ENCODE measurements at regions of chr1 and their contacts with region 1.

Region 1: DNA sequence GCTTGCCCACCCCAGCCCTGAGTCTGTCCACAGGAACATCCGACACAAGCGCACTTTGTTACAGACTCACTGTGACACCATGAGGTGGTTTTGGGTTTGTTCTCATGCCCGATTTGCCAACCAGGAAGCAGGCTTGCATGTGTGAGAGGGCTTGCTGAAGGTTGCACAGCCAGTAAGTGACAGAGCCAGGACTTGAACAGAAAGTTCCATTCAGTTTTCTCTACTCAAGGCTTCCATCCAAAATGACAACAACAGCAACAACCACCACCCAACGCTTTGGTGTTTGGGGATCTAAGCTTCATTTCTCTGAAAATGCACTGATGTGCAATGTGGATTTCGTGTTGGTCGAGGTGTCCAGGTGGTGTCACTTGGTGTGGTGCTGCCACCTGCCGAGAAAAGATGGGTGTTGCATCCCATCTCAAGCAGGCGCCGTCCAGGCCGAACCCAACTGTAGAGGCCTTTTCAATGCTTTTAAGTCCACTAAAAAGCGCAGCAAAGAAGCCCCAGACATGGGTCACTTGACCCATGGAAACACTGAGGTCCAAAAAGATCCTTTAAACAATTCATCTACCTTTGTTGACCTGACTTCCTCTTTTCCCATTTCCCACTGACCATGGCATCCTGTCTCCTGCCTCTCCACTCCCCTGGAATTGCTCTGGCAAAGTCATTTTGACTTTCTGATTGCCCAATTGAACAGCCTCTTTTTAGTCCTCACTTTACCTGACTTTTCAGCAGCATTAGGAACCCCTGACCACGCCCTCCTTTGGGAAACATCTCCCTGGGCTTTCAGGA is 12.2 kb downstream of the CITED4 start:
- DNase-seq: peak; percentile 46
- H3K4me3 ChIP-seq: no peak overlapping the region
- H3K27ac ChIP-seq: no peak overlapping the region
- H3K4me1 ChIP-seq: peaks cover 6% of the 10 kb centered on the region
- H3K27me3 ChIP-seq: no peaks in the 10 kb centered on the region
- CTCF ChIP-seq: peak; percentile 89 to 93

Region 2: DNA sequence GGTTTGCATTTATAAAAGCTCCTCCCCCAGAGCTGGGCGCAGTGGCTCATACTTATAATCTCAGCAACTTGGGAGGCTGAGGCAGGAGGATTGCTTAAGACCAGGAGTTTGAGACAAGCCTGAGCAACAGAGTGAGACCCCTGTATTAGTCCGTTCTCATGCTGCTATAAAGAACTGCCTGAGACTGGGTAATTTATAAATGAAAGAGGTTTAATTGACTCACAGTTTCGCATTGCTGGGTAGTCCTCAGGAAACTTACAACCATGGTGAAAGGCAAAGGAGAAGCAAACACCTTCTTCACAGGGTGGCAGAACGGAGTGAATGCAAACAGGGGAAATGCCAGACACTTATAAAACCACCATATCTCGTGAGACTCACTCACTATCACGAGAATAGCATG is 266.0 kb before region 1 on chr1:
- CTCF ChIA-PET with region 1: no interaction called
- dilution Hi-C with region 1: loop called (anchors 10 kb)
- in situ Hi-C with region 1: no loop called
- intact Hi-C with region 1: no loop called
- DNase-seq: peak; percentile 34
- H3K4me3 ChIP-seq: no peak overlapping the region
- H3K27ac ChIP-seq: peak overlapping the region; percentile 6
- H3K4me1 ChIP-seq: no peaks in the 10 kb centered on the region
- H3K27me3 ChIP-seq: no peaks in the 10 kb centered on the region
- CTCF ChIP-seq: no peak

Region 3: GRCh38 chr1:40625066-40625465 is 224.9 kb before region 1 on chr1:
- CTCF ChIA-PET with region 1: interaction called, 3 read pairs
- dilution Hi-C with region 1: no loop called
- in situ Hi-C with region 1: no loop called
- intact Hi-C with region 1: loop called (anchors 5 kb)
- DNase-seq: peak; percentile 37
- H3K4me3 ChIP-seq: no peak overlapping the region
- H3K27ac ChIP-seq: no peak overlapping the region
- H3K4me1 ChIP-seq: peaks cover 33% of the 10 kb centered on the region
- H3K27me3 ChIP-seq: no peaks in the 10 kb centered on the region
- CTCF ChIP-seq: peak; percentile 43 to 76

Region 4: DNA sequence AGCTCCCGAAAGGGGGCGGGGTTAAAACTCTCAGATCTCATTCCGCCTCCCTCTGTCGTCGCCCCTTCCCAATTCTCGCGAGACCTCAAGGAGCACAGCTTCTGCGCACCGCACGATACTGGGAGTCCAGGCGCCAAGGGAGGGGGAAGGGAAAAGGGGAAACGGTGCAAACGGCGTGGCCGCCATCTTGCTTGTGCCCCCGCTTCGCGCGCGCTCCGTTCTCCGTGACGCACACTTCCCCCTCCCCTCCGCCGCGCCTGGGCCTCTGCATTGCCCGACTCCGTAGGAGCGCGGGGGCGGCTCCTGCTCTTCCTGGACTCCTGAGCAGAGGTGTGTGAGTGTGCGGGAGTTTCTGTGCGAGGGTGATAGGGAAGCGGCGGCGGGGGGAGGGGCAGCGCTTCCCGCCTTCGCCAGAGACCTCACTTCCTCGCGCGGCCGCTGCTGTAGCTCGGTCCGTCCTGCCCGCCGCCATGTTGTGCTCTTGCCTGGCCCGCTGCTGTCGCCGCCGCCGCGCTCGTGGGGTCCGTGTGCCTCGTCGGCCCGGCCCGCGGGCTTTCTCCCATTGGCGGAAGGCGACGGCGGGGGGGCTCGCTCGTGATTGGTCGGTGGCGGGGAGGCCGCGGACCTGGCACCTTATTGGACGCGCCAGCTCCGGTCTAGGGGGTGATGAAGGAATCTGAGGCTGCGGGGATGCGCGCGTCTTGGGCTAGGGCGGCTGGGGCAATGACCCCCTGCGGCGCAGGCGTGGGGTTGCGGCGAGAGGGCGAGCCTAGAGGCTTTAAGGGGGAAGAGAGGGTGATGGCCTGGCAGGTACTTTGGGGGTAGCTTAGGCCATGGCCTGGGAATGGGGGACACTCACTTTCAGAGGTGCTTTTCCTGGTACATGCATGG is 158.2 kb before region 1 on chr1 and contains the start of gene NFYC:
- CTCF ChIA-PET with region 1: no interaction called
- dilution Hi-C with region 1: no loop called
- in situ Hi-C with region 1: no loop called
- intact Hi-C with region 1: loop called (anchors 10 kb)
- DNase-seq: peak; percentile 96
- H3K4me3 ChIP-seq: peak within 1 kb of the TSS; percentile 49 to 77 (median 73)
- H3K27ac ChIP-seq: peak within 1 kb of the TSS; percentile 90
- H3K4me1 ChIP-seq: peaks cover 13% of the 10 kb centered on the region
- H3K27me3 ChIP-seq: no peaks in the 10 kb centered on the region
- CTCF ChIP-seq: no peak
- total RNA-seq, gene NFYC: 32.0 to 48.7 TPM

Region 5: GRCh38 chr1:40899230-40899870 is 49.4 kb after region 1 on chr1:
- CTCF ChIA-PET with region 1: no interaction called
- dilution Hi-C with region 1: no loop called
- in situ Hi-C with region 1: no loop called
- intact Hi-C with region 1: loop called (anchors 1 kb)
- DNase-seq: peak; percentile 95
- H3K4me3 ChIP-seq: no peak overlapping the region
- H3K27ac ChIP-seq: peak overlapping the region; percentile 79
- H3K4me1 ChIP-seq: peaks cover 55% of the 10 kb centered on the region
- H3K27me3 ChIP-seq: no peaks in the 10 kb centered on the region
- CTCF ChIP-seq: no peak

Region 6: DNA sequence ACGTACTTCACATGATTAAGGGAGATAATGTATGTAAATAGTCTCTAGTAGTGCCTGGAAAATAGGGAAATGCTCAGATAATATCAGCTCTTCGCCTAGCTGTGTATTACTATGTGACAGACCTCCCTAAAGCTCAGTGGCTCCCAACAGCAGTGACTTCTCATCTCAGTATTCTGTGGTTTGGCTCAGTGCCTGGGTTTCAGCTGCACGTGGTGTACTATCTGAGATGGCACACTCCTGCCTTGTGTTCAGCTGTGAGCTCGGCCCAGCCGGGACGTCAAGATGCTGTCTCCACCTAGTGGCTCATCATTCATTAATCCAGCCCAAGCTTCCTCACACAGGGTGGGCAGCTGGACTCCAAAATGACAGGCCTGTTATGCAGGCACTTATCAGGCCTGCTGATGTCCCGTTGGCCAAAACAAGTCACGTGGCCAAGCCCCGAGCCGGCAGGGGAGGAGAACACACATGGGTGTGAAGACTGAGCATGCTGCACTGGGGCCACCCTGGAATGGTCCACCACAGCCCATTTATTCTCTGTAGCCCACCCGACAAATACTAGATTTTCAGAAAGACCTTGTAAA is 153.7 kb after region 1 on chr1:
- CTCF ChIA-PET with region 1: no interaction called
- dilution Hi-C with region 1: no loop called
- in situ Hi-C with region 1: no loop called
- intact Hi-C with region 1: loop called (anchors 1 kb)
- DNase-seq: peak; percentile 97
- H3K4me3 ChIP-seq: no peak overlapping the region
- H3K27ac ChIP-seq: peak overlapping the region; percentile 38
- H3K4me1 ChIP-seq: peaks cover 49% of the 10 kb centered on the region
- H3K27me3 ChIP-seq: no peaks in the 10 kb centered on the region
- CTCF ChIP-seq: peak; percentile 57 to 74

Region 7: DNA sequence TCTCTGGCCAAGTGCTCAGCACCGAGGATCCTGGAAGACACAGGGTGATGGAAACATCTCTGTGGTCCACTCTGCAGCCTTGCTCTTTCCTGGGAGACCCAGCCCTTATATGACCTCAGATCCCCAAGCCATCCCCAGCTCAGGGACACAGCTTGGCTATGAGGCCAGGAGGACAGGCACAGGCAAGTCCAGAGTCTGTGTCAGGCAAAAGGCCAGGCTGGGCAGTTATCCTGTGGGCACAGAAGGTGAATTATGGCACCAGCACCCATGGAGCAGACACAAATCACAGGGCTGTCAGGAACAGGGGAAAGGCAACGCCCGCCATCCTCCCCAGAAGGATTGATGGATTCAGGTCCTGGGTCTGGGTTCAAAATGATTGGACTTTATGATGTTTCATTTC is 444.2 kb after region 1 on chr1:
- CTCF ChIA-PET with region 1: no interaction called
- dilution Hi-C with region 1: no loop called
- in situ Hi-C with region 1: no loop called
- intact Hi-C with region 1: no loop called
- DNase-seq: no peak
- H3K4me3 ChIP-seq: no peak overlapping the region
- H3K27ac ChIP-seq: no peak overlapping the region
- H3K4me1 ChIP-seq: peaks cover 7% of the 10 kb centered on the region
- H3K27me3 ChIP-seq: peaks cover 2% of the 10 kb centered on the region
- CTCF ChIP-seq: no peak